A673 (cell line): ENCODE measurements at regions of chr1 and their contacts with region 1.

Region 1: DNA sequence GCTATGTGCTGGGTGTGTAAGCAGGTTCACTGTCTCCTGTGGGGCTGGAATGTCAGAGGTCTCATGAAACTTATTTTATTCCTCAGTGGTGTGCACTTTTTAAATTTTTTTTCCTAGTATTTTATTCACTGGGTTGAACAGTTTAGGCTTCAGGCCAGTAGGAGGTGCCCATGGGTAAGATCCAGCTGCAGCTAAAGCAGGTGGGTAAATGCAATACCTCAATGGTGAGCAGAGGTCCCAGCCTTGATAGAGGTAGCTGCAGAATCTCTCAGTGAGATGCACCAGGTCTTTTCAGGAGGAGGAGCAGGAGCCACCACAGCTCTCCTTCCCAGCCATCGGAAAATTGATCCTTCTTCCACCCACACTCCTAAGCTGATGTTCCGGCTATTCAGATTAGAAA is 12.6 kb upstream of the OR6N2 start:
- DNase-seq: no peak
- H3K4me3 ChIP-seq: no peak overlapping the region
- H3K27ac ChIP-seq: no peak overlapping the region
- H3K4me1 ChIP-seq: no peaks in the 10 kb centered on the region
- H3K27me3 ChIP-seq: peaks cover 5% of the 10 kb centered on the region
- CTCF ChIP-seq: peak; percentile 45

Region 2: GRCh38 chr1:158830904-158831507 is 37.4 kb after region 1 on chr1 and contains the start of gene MNDA:
- CTCF ChIA-PET with region 1: no interaction called
- POLR2A ChIA-PET with region 1: no interaction called
- intact Hi-C with region 1: loop called (anchors 2 kb)
- DNase-seq: no peak
- H3K4me3 ChIP-seq: no peak within 1 kb of the TSS
- H3K27ac ChIP-seq: no peak within 1 kb of the TSS
- H3K4me1 ChIP-seq: no peaks in the 10 kb centered on the region
- H3K27me3 ChIP-seq: peaks cover 3% of the 10 kb centered on the region
- CTCF ChIP-seq: no peak
- total RNA-seq, gene MNDA: not detected in 2 replicates